PC-9 (cell line): ENCODE measurements at regions of chr5 and their contacts with region 1.

Region 1: GRCh38 chr5:60677844-60678664 is 21.9 kb downstream of the DEPDC1B start:
- DNase-seq: no peak
- H3K4me3 ChIP-seq: no peak overlapping the region
- H3K27ac ChIP-seq: no peak overlapping the region
- H3K4me1 ChIP-seq: no peaks in the 10 kb centered on the region
- H3K27me3 ChIP-seq: no peaks in the 10 kb centered on the region
- CTCF ChIP-seq: peak; percentile 75

Region 2: DNA sequence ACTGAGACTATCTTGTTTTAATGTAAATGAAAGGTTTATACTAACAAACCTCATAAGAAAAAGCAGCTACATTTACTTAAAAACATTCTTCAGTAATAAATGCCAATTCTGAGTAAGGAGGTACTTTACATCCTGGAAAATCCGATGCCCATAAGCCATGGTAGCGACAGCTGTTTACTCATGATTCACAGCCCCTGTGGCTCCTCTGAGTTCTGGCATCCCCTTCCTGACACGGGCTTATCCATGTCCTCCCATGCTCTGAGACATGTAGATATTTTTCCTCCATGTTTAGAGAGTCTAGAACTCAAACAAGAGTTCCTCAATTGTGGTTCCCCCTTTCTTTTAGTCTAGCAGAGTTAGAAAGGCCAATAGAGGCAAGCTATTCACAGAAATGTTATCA is 85.0 kb after region 1 on chr5:
- CTCF ChIA-PET with region 1: no interaction called
- POLR2A ChIA-PET with region 1: no interaction called
- intact Hi-C with region 1: no loop called
- DNase-seq: no peak
- H3K4me3 ChIP-seq: no peak overlapping the region
- H3K27ac ChIP-seq: no peak overlapping the region
- H3K4me1 ChIP-seq: no peaks in the 10 kb centered on the region
- H3K27me3 ChIP-seq: no peaks in the 10 kb centered on the region
- CTCF ChIP-seq: no peak

Region 3: GRCh38 chr5:60843936-60844905 is 166.2 kb after region 1 on chr5 and contains the start of gene ELOVL7:
- CTCF ChIA-PET with region 1: no interaction called
- POLR2A ChIA-PET with region 1: no interaction called
- intact Hi-C with region 1: loop called (anchors 5 kb)
- DNase-seq: peak; percentile 74 to 94
- H3K4me3 ChIP-seq: peak within 1 kb of the TSS; percentile 97
- H3K27ac ChIP-seq: 0 out of 2 replicates have a peak within 1 kb of the TSS, but pooled peaks have one; percentile 21
- H3K4me1 ChIP-seq: peaks cover 17% of the 10 kb centered on the region
- H3K27me3 ChIP-seq: no peaks in the 10 kb centered on the region
- CTCF ChIP-seq: no peak; the same call in 1 of the 2 replicates
- total RNA-seq, gene ELOVL7: 17.2 and 24.3 TPM in 2 replicates

Region 4: DNA sequence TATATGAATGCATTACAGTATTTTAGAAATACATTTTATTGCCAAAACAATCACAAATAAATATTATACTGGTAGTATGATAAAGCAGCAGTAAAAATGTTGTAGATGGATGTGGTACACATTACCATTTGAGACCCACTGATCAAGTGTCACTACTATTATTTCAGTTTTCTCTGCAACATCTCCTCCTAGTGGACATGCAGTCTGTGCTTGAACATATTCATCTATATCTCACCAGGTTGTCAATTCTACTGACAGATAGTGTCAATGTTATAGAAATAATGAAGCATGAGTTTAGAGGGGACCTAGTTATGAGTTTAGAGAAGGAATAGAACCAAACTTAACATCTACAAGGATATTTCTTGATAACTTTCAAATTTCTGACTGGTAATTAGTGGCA is 205.2 kb after region 1 on chr5:
- CTCF ChIA-PET with region 1: no interaction called
- POLR2A ChIA-PET with region 1: no interaction called
- intact Hi-C with region 1: loop called (anchors 1 kb)
- DNase-seq: no peak
- H3K4me3 ChIP-seq: no peak overlapping the region
- H3K27ac ChIP-seq: no peak overlapping the region
- H3K4me1 ChIP-seq: no peaks in the 10 kb centered on the region
- H3K27me3 ChIP-seq: no peaks in the 10 kb centered on the region
- CTCF ChIP-seq: peak; percentile 65; the same call in 1 of the 2 replicates

Region 5: GRCh38 chr5:60929024-60929423 is 251.0 kb after region 1 on chr5:
- CTCF ChIA-PET with region 1: no interaction called
- POLR2A ChIA-PET with region 1: no interaction called
- intact Hi-C with region 1: loop called (anchors 10 kb)
- DNase-seq: no peak
- H3K4me3 ChIP-seq: no peak overlapping the region
- H3K27ac ChIP-seq: no peak overlapping the region
- H3K4me1 ChIP-seq: no peaks in the 10 kb centered on the region
- H3K27me3 ChIP-seq: no peaks in the 10 kb centered on the region
- CTCF ChIP-seq: peak; percentile 65

Region 6: DNA sequence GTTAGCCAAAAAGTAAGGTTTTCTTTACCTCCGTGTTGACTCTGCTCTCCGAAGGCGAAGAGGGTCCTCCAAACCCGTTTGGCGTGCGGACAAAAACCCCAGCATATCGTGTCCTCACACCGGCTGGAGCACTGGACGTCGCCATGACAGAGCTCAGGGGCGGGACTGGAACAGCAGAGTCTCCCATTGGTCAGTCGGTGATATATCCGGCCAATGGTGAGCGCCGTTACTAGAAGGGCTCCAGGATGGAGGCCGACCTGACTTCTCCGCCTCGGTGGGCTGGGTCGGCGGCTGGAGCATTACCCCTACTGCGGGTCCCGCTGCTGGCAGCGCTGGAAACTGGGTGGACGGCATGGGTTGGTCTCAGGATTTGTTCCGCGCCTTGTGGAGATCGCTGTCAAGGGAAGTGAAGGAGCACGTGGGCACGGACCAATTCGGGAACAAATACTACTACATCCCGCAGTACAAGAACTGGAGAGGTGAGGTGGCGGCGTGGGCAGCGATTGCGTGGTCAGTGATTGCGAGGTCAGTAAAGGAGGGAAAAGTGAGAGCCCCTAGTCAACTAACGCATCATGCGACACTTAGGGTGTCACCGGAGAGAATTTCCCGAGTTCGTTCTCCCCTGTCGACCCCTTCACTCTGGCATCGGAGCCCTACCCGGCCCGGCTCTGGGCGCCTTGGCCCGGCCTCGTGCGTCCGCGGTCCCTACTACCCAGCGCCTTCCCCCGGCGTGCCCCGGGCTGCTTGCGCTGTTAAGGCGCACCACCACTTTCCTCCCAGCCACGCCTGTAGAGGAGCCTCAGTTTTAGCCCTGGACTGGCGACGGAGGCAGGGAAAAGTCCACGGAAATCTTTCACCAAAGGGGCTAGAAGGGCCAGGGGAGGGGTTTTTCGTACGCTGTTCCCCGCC is 267.1 kb after region 1 on chr5 and contains the starts of genes ERCC8 and NDUFAF2:
- CTCF ChIA-PET with region 1: no interaction called
- POLR2A ChIA-PET with region 1: no interaction called
- intact Hi-C with region 1: loop called (anchors 5 kb)
- DNase-seq: peak; percentile 84 to 86
- H3K4me3 ChIP-seq: peak within 1 kb of the TSS; percentile 98
- H3K27ac ChIP-seq: peak within 1 kb of the TSS; percentile 70
- H3K4me1 ChIP-seq: peaks cover 26% of the 10 kb centered on the region
- H3K27me3 ChIP-seq: no peaks in the 10 kb centered on the region
- CTCF ChIP-seq: no peak
- total RNA-seq, gene ERCC8: 8.7 and 13.0 TPM in 2 replicates
- total RNA-seq, gene NDUFAF2: 20.7 and 42.7 TPM in 2 replicates

Region 7: GRCh38 chr5:61901997-61902396 is 1223.9 kb after region 1 on chr5:
- CTCF ChIA-PET with region 1: no interaction called
- POLR2A ChIA-PET with region 1: no interaction called
- intact Hi-C with region 1: no loop called
- DNase-seq: no peak
- H3K4me3 ChIP-seq: no peak overlapping the region
- H3K27ac ChIP-seq: no peak overlapping the region
- H3K4me1 ChIP-seq: no peaks in the 10 kb centered on the region
- H3K27me3 ChIP-seq: no peaks in the 10 kb centered on the region
- CTCF ChIP-seq: no peak